MCF 10A (cell line): ENCODE measurements at regions of chr2 and their contacts with region 1.

Region 1: DNA sequence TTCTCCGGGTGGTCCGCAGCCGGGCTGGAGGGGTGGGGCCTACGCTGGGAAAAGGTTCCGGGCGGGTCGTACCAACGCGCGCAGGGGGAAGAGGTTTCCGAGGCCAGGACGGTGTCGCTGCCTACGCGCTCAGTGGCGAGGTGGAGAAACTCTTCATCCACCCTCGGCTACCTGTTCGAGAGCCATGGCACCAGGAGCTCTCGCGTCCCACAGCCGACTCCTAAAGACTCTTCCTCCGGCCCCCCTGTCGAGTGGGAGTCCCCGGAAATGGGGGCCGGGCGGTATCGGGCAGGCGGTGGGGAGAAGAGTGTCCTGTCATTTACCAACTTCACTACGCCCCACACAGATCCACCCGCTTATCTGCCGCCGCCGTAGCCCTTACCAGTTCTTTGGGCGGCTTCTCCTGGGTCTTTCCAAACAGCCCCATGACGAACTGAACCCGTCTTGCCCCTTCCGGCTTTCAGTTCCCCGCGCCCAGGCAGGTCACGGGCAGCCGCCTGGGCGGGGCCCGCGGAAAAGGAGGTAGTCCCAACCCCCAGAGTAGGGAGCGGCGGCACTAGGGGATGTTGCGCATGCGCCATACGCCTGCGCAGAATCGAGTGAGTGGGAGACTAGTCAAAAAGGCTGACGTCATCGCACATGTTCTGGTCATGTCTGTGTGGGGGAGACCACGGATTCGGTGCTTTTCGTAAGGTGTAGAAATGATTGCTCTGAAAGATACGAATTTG is at the start of gene CHMP3:
- DNase-seq: peak; percentile 98
- H3K4me3 Mint-ChIP-seq: peak within 1 kb of the TSS; percentile 94
- H3K27ac Mint-ChIP-seq: peak within 1 kb of the TSS; percentile 100
- H3K4me1 Mint-ChIP-seq: peaks cover 26% of the 10 kb centered on the region
- H3K27me3 Mint-ChIP-seq: no peaks in the 10 kb centered on the region
- CTCF ChIP-seq: no peak
- total RNA-seq, gene CHMP3: 123 and 131 TPM in 2 replicates

Region 2: GRCh38 chr2:86195055-86195807 is 367.9 kb before region 1 on chr2 and contains the start of gene IMMT:
- CTCF ChIA-PET with region 1: no interaction called
- POLR2A ChIA-PET with region 1: interaction called, 10 read pairs
- intact Hi-C with region 1: no loop called
- DNase-seq: peak; percentile 96
- H3K4me3 Mint-ChIP-seq: peak within 1 kb of the TSS; percentile 95
- H3K27ac Mint-ChIP-seq: peak within 1 kb of the TSS; percentile 98
- H3K4me1 Mint-ChIP-seq: peaks cover 14% of the 10 kb centered on the region
- H3K27me3 Mint-ChIP-seq: no peaks in the 10 kb centered on the region
- CTCF ChIP-seq: no peak
- total RNA-seq, gene IMMT: 84.6 and 114 TPM in 2 replicates

Region 3: GRCh38 chr2:86498468-86499250 is 64.4 kb before region 1 on chr2:
- CTCF ChIA-PET with region 1: no interaction called
- POLR2A ChIA-PET with region 1: interaction called, 22 read pairs
- intact Hi-C with region 1: no loop called
- DNase-seq: peak; percentile 94
- H3K4me3 Mint-ChIP-seq: no peak overlapping the region
- H3K27ac Mint-ChIP-seq: peak overlapping the region; percentile 21
- H3K4me1 Mint-ChIP-seq: peaks cover 13% of the 10 kb centered on the region
- H3K27me3 Mint-ChIP-seq: no peaks in the 10 kb centered on the region
- CTCF ChIP-seq: no peak

Region 4: DNA sequence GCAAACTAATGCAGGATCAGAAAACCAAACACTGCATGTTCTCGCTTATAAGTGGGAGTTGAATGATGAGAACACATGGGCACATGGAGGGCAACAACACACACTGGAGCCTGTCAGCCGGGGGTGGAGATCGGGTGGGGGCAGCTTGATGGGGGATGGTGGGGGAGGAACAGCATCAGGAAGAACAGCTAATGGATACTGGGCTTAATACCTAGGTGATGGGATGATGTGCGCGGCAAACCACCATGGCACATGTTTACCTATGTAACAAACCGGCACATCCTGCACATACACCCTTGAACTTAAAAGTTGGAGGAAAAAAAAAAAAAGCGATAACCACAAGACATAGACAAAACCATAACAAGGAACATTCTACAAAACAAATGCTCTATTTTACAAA is 10.2 kb before region 1 on chr2:
- CTCF ChIA-PET with region 1: interaction called, 4 read pairs
- POLR2A ChIA-PET with region 1: interaction called, 13 read pairs
- intact Hi-C with region 1: no loop called
- DNase-seq: no peak
- H3K4me3 Mint-ChIP-seq: no peak overlapping the region
- H3K27ac Mint-ChIP-seq: no peak overlapping the region
- H3K4me1 Mint-ChIP-seq: no peaks in the 10 kb centered on the region
- H3K27me3 Mint-ChIP-seq: no peaks in the 10 kb centered on the region
- CTCF ChIP-seq: no peak

Region 5: GRCh38 chr2:86598966-86599365 is 35.9 kb after region 1 on chr2:
- CTCF ChIA-PET with region 1: no interaction called
- POLR2A ChIA-PET with region 1: interaction called, 13 read pairs
- intact Hi-C with region 1: no loop called
- DNase-seq: peak; percentile 50
- H3K4me3 Mint-ChIP-seq: no peak overlapping the region
- H3K27ac Mint-ChIP-seq: peak overlapping the region; percentile 24
- H3K4me1 Mint-ChIP-seq: peaks cover 5% of the 10 kb centered on the region
- H3K27me3 Mint-ChIP-seq: no peaks in the 10 kb centered on the region
- CTCF ChIP-seq: no peak